Common myeloid progenitor, CD34-positive (primary cell): ENCODE measurements at regions of chr12 and their contacts with region 1.

Region 1: GRCh38 chr12:120856980-120857379 is 47.2 kb downstream of the SPPL3 start:
- DNase-seq: peak; percentile 21 to 37 (median 29)
- H3K4me3 ChIP-seq: no peak overlapping the region
- H3K27ac ChIP-seq: peak overlapping the region in 1 of 2 experiments; percentile 36
- H3K4me1 ChIP-seq: peaks cover 23 to 40% (median 34%) of the 10 kb centered on the region in 4 experiments
- H3K27me3 ChIP-seq: no peaks in the 10 kb centered on the region

Region 2: DNA sequence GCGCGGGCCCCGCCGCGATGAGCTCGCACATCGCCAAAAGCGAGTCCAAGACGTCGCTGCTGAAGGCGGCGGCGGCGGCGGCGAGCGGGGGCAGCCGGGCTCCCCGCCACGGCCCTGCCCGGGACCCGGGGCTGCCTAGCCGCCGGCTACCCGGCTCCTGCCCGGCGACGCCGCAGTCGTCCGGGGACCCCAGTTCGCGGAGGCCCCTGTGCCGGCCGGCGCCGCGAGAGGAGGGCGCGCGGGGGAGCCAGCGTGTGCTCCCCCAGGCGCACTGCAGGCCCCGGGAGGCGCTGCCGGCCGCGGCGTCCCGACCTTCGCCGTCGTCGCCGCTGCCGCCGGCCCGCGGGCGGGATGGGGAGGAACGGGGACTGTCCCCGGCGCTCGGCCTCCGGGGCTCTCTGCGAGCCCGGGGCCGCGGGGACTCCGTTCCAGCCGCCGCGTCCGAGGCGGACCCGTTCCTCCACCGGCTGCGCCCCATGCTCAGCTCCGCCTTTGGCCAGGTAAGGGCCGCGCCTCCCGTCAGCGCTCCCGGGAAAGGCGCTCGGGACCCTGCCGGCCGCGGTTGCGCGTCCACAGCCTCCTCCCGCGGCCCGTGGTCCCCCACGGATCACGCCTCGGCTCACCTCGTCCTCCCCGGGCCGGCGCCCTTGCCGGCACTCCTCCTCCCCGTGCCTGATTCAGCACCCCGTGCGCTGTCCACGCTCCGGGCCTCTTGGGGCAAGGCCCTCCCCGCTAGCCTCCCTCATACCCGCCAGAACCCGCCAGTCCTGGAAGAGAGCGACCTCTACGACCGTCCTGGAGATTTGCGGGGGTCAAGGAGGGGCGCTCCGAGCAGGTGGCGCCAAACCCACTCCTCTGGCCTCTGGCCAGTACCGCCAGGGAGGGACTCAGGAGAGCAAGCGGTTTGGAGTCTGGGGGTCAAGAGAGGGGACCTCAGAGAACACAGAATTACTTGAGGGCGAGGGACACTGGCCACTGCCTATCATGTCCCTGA is 215.8 kb before region 1 on chr12:
- CTCF ChIA-PET with region 1: no interaction called
- POLR2A ChIA-PET with region 1: no interaction called
- DNase-seq: peak; percentile 52 to 84 (median 77)
- H3K4me3 ChIP-seq: peak overlapping the region; percentile 15 to 69 (median 53)
- H3K27ac ChIP-seq: no peak overlapping the region
- H3K4me1 ChIP-seq: peaks cover 4 to 19% (median 16%) of the 10 kb centered on the region in 4 experiments
- H3K27me3 ChIP-seq: peaks cover 16 to 63% (median 34%) of the 10 kb centered on the region in 5 experiments

Region 3: GRCh38 chr12:120873226-120873625 is 16.2 kb after region 1 on chr12:
- CTCF ChIA-PET with region 1: interaction called, 21 read pairs
- POLR2A ChIA-PET with region 1: interaction called, 3 read pairs
- DNase-seq: no peak
- H3K4me3 ChIP-seq: peak overlapping the region in 2 of 7 experiments; percentile 32 to 48
- H3K27ac ChIP-seq: peak overlapping the region in 1 of 2 experiments; percentile 25
- H3K4me1 ChIP-seq: peaks cover 3 to 13% (median 13%) of the 10 kb centered on the region in 4 experiments
- H3K27me3 ChIP-seq: no peaks in the 10 kb centered on the region